ENCODE measurements at regions of chr2 and their contacts with region 1.

Region 1: GRCh38 chr2:100235098-100235497 is 87.2 kb downstream of the LONRF2 start:
- DNase-seq: no peak
- H3K4me3 ChIP-seq: no peak overlapping the region
- H3K4me3 Mint-ChIP-seq: peak overlapping the region; percentile 13 to 44
- H3K27ac ChIP-seq: no peak overlapping the region
- H3K27ac Mint-ChIP-seq: no peak overlapping the region
- H3K4me1 ChIP-seq: peaks cover 9 to 11% of the 10 kb centered on the region in 2 donors
- H3K4me1 Mint-ChIP-seq: peaks cover 15% of the 10 kb centered on the region
- H3K27me3 ChIP-seq: no peaks in the 10 kb centered on the region
- H3K27me3 Mint-ChIP-seq: peaks cover 2 to 3% (median 2%) of the 10 kb centered on the region in 3 donors
- CTCF ChIP-seq: no peak

Region 2: GRCh38 chr2:99940963-99941362 is 294.1 kb before region 1 on chr2:
- intact Hi-C with region 1: no loop called
- DNase-seq: no peak
- H3K4me3 ChIP-seq: no peak overlapping the region
- H3K4me3 Mint-ChIP-seq: no peak overlapping the region
- H3K27ac ChIP-seq: no peak overlapping the region
- H3K27ac Mint-ChIP-seq: no peak overlapping the region
- H3K4me1 ChIP-seq: no peaks in the 10 kb centered on the region
- H3K4me1 Mint-ChIP-seq: peaks cover 9% of the 10 kb centered on the region
- H3K27me3 ChIP-seq: no peaks in the 10 kb centered on the region
- H3K27me3 Mint-ChIP-seq: no peaks in the 10 kb centered on the region
- CTCF ChIP-seq: no peak

Region 3: DNA sequence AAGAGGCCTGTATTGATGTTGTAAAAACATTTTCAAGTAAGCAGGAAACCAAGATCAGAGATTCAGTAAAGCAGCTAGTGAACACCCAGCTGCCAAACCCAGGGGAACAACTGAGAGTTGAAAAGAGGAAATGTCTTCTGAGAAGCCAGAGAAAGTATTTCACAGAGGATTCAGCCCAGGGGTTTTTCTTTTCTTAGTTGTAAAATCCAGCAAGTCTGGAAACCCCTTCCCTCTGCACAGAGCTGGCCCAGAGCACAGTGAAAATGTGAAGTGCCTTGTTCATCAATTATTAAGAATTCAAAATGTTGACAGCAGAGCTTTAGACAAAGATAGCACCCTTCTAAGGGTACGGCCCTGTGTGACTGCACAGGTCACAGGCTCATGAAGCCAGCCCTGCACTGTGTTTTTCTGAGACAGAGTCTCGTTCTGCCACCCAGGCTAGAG is 121.1 kb before region 1 on chr2:
- intact Hi-C with region 1: loop called in 1 of 2 experiments (anchors 10 kb)
- DNase-seq: peak in 2 of 3 donors; percentile 8 to 23
- H3K4me3 ChIP-seq: no peak overlapping the region
- H3K4me3 Mint-ChIP-seq: peak overlapping the region in 1 of 2 donors; percentile 63
- H3K27ac ChIP-seq: peak overlapping the region; percentile 7 to 39
- H3K27ac Mint-ChIP-seq: peak overlapping the region in 3 of 7 donors; percentile 23 to 76 (median 69)
- H3K4me1 ChIP-seq: peaks cover 21 to 27% of the 10 kb centered on the region in 2 donors
- H3K4me1 Mint-ChIP-seq: peaks cover 35% of the 10 kb centered on the region
- H3K27me3 ChIP-seq: no peaks in the 10 kb centered on the region
- H3K27me3 Mint-ChIP-seq: peaks cover 0 to 1% (median 0%) of the 10 kb centered on the region in 3 donors
- CTCF ChIP-seq: no peak

Region 4: DNA sequence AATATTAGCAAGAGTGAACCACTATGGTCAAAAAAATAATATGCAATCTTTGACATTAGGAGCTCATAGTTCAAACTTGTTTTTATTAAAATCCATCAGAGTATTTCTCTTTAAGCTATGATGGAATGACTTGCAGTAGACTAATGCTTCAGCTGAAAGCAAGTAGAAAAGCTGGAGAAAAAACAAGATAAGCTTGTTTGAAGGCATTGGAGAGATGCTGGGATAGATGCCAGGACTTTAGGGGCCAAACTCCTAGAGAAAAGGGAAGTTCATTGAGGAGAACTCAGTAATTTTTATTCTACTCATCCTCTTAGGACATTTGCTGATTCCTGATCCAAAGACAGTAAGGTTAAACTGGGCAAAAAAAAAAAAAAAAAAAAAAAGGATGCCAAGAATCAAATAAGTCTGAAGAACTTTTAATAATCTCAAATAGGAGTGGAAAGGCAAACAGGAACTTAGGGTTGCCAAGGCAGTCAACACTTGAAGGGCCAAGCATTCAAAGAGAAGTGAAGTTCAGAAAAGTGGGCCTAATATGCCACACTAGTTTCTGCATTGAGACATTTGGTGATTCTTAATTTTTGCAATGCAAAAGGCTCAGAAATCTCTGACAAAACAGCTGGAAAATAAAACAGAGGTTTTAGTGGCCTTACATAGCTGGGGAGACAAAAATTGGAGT is 73.0 kb before region 1 on chr2:
- intact Hi-C with region 1: no loop called
- DNase-seq: no peak
- H3K4me3 ChIP-seq: no peak overlapping the region
- H3K4me3 Mint-ChIP-seq: no peak overlapping the region
- H3K27ac ChIP-seq: no peak overlapping the region
- H3K27ac Mint-ChIP-seq: no peak overlapping the region
- H3K4me1 ChIP-seq: no peaks in the 10 kb centered on the region
- H3K4me1 Mint-ChIP-seq: no peaks in the 10 kb centered on the region
- H3K27me3 ChIP-seq: no peaks in the 10 kb centered on the region
- H3K27me3 Mint-ChIP-seq: peaks cover 0 to 3% (median 0%) of the 10 kb centered on the region in 3 donors
- CTCF ChIP-seq: no peak

Measured in CD14-positive monocyte (primary cell).